Prostate gland (tissue), 2 donors: ENCODE measurements at regions of chr1 and their contacts with region 1.

Region 1: GRCh38 chr1:2194898-2195673 is 514 bp upstream of the FAAP20 start:
- DNase-seq: peak; percentile 92
- H3K4me3 ChIP-seq: peak overlapping the region; percentile 69 to 76
- H3K27ac ChIP-seq: peak overlapping the region; percentile 96 to 98
- H3K4me1 ChIP-seq: peaks cover 23% of the 10 kb centered on the region
- H3K27me3 ChIP-seq: no peaks in the 10 kb centered on the region
- CTCF ChIP-seq: peak; percentile 85 to 99 (median 96)
- POLR2A ChIP-seq: no peak

Region 2: GRCh38 chr1:2314803-2315673 is 120.0 kb after region 1 on chr1:
- intact Hi-C with region 1: loop called (anchors 1 kb)
- DNase-seq: no peak
- H3K4me3 ChIP-seq: peak overlapping the region; percentile 56 to 68
- H3K27ac ChIP-seq: peak overlapping the region; percentile 83 to 89
- H3K4me1 ChIP-seq: peaks cover 27% of the 10 kb centered on the region
- H3K27me3 ChIP-seq: no peaks in the 10 kb centered on the region
- CTCF ChIP-seq: peak; percentile 78 to 100 (median 90)
- POLR2A ChIP-seq: no peak

Region 3: DNA sequence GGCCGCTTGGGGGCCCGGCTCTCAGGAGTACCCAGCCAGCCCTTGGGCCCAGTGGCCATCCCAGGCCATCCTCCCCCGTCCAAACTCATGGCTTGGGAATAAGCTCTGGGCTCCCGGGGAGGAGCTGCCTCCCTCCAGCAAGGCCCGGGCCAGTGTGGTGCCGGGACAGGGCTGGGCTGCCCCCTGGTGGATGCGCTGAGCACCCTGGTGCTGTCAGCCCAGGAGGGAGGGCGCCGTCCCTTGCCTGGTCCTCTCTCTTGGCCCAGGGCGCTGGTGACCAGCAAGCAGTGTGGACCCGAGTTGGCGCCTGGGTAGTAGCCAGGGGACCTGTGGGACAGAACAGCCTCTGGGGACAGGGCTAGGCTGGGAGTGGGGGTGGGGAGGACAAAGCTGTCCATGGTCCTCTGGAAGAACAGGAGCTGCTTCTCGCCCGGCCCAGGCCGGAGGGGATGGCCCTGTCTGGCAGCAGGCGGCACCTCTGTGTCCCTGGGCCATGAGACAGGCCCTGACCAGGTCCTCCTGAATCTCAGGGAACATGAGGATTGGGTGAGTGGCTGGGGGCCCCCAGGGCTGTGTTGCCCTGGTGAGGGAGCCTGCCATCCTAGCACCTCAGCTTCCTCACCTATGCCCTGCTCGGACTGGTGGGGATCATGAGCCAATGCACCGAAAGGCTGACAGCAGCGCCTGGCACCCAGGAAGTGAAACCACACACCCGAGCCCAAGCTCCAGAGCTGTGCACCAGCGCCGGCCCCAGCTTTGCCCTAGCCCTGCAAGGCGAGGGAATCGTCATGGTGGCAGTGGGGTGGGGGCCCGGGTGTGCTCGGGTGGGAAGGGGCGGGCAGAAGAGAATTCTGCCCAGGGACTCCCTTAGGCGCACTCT is 186.9 kb after region 1 on chr1:
- intact Hi-C with region 1: loop called (anchors 1 kb)
- DNase-seq: peak; percentile 69
- H3K4me3 ChIP-seq: no peak overlapping the region
- H3K27ac ChIP-seq: no peak overlapping the region
- H3K4me1 ChIP-seq: no peaks in the 10 kb centered on the region
- H3K27me3 ChIP-seq: no peaks in the 10 kb centered on the region
- CTCF ChIP-seq: peak; percentile 92 to 98 (median 96)
- POLR2A ChIP-seq: no peak

Region 4: GRCh38 chr1:2525920-2526823 is 331.1 kb after region 1 on chr1 and contains the start of gene PANK4:
- intact Hi-C with region 1: loop called (anchors 10 kb)
- DNase-seq: peak; percentile 92
- H3K4me3 ChIP-seq: peak within 1 kb of the TSS; percentile 78 to 83
- H3K27ac ChIP-seq: peak within 1 kb of the TSS; percentile 76 to 84
- H3K4me1 ChIP-seq: peaks cover 18% of the 10 kb centered on the region
- H3K27me3 ChIP-seq: no peaks in the 10 kb centered on the region
- CTCF ChIP-seq: peak in 2 of 4 experiments; percentile 45 to 60
- POLR2A ChIP-seq: peak; percentile 54
- total RNA-seq, gene PANK4: 27.0 to 69.5 TPM

Region 5: DNA sequence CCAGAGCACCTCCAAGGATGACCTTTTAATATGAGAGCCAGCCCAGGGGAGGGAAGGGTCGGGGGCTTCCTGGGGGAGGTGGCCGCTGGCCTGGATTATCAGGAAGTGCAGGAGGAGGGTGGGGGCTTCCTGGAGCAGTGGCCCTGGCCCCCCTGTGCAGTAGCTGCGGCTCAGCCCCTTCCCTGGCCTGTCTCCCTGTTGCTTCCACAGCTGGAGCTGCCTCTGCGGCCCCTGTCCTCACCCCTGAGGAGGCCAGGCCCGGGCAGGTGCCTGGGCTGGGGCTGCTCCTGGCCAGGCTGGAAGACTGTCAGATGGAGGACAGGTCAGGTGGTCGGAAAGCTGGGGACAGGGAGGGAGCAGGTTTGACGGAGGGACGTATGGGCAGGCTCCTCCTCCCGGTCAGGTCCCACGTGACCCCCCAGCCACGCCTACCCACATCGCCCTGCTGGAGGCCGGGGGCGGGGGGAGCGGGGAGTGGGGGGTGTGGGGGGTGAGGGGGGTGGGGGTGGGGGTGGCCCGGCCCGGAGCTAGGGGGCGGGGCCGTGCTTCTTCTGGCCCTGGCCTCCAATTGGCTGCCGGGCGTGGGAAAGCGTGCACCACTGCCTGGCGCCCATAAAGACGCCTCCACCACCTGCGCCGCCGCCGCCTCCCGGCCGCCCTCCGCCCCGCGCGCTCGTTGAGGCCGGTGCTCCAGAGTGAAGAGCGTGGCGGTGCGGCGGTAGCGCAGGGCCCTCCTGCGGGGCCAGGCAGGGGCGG is 350.9 kb after region 1 on chr1:
- intact Hi-C with region 1: loop called (anchors 5 kb)
- DNase-seq: peak; percentile 89
- H3K4me3 ChIP-seq: peak overlapping the region; percentile 17 to 38
- H3K27ac ChIP-seq: peak overlapping the region; percentile 98 to 99
- H3K4me1 ChIP-seq: peaks cover 23% of the 10 kb centered on the region
- H3K27me3 ChIP-seq: no peaks in the 10 kb centered on the region
- CTCF ChIP-seq: no peak
- POLR2A ChIP-seq: peak; percentile 35

Region 6: GRCh38 chr1:2586154-2587070 is 391.3 kb after region 1 on chr1 and contains the start of gene PRXL2B:
- intact Hi-C with region 1: loop called (anchors 10 kb)
- DNase-seq: peak; percentile 99
- H3K4me3 ChIP-seq: peak within 1 kb of the TSS; percentile 87 to 88
- H3K27ac ChIP-seq: peak within 1 kb of the TSS; percentile 97 to 99
- H3K4me1 ChIP-seq: peaks cover 21% of the 10 kb centered on the region
- H3K27me3 ChIP-seq: no peaks in the 10 kb centered on the region
- CTCF ChIP-seq: peak in 2 of 4 experiments; percentile 30 to 38
- POLR2A ChIP-seq: peak; percentile 98
- total RNA-seq, gene PRXL2B: 20.3 to 25.8 TPM